ENCODE measurements at regions of chr14 and their contacts with region 1.

Region 1: DNA sequence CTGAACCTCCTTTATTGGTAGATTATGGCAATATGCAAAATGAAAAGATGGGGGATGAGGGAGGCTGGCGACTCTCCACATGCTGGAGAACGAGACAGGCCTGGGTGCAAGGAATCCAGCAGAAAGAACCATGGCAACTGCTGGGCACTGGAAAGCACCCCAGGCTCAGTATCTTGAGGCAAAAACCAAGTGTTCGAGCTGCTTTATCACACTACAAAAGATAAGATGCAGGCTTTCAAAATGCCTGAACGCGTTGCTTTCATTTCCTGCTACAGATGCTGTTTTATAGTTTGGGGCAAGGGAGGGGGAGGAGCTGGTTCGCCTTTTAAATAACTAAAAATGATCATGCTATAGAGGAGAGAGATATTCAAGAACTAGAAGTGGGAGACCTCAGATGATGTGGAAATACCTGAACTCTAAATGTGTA is 38.9 kb downstream of the NIN start:
- DNase-seq: peak; percentile 73
- H3K4me3 Mint-ChIP-seq: peak overlapping the region; percentile 72
- H3K27ac Mint-ChIP-seq: peak overlapping the region; percentile 75
- H3K4me1 Mint-ChIP-seq: peaks cover 44% of the 10 kb centered on the region
- H3K27me3 Mint-ChIP-seq: no peaks in the 10 kb centered on the region

Region 2: GRCh38 chr14:50813544-50813863 is 21.4 kb after region 1 on chr14:
- intact Hi-C with region 1: loop called (anchors 2 kb)
- DNase-seq: peak; percentile 74
- H3K4me3 Mint-ChIP-seq: peak overlapping the region; percentile 80
- H3K27ac Mint-ChIP-seq: peak overlapping the region; percentile 86
- H3K4me1 Mint-ChIP-seq: peaks cover 33% of the 10 kb centered on the region
- H3K27me3 Mint-ChIP-seq: no peaks in the 10 kb centered on the region